Activated CD4-positive, alpha-beta T cell treated with anti-CD3 and anti-CD28 coated beads, Interleukin-2, amount 10 ng/mL, durations not matched to agents 7 days and 5 days (primary cell): ENCODE measurements at regions of chr6 and their contacts with region 1.

Region 1: DNA sequence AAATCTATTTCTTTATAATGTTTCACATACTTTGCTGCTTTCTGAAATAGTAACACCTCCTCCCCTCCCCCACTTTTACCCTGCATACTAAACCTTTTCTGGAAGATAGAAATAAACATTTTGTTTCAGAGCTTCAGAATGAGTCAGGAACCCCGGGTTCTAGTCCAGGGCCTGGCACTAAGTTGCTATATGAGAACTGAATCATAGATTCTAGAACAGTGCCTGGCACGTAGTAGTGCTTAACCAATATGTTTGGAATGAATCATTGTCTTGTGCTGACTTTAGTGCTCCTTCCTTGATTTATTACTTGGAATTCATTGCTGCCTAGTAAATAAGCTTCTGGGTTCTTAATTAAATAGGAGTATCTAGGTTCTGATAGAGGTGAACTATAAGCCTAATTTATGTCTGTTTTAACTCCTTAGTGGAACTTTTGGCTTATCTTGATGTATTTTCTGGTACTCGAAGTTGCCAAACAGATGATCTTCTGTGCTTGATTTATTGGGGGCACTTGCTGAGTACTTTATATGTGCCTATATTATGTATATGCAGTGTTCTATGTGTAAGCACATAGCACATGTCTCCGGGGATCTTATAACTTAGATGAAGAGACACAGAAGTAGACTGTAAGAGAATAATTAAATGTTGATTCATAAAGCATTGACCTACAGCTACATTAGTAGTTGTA is 18.6 kb downstream of the TAB2 start:
- DNase-seq: peak; percentile 20
- H3K4me3 Mint-ChIP-seq: peak overlapping the region; percentile 1
- H3K27ac Mint-ChIP-seq: peak overlapping the region; percentile 72
- H3K4me1 Mint-ChIP-seq: peaks cover 82% of the 10 kb centered on the region
- H3K27me3 Mint-ChIP-seq: no peaks in the 10 kb centered on the region

Region 2: GRCh38 chr6:149324428-149324827 is 11.6 kb before region 1 on chr6:
- CTCF ChIA-PET with region 1: interaction called, 30 read pairs
- POLR2A ChIA-PET with region 1: no interaction called
- DNase-seq: no peak
- H3K4me3 Mint-ChIP-seq: peak overlapping the region; percentile 40
- H3K27ac Mint-ChIP-seq: peak overlapping the region; percentile 68
- H3K4me1 Mint-ChIP-seq: peaks cover 78% of the 10 kb centered on the region
- H3K27me3 Mint-ChIP-seq: no peaks in the 10 kb centered on the region

Region 3: GRCh38 chr6:149484733-149485700 is 149.0 kb after region 1 on chr6 and contains the start of gene ZC3H12D:
- CTCF ChIA-PET with region 1: no interaction called
- POLR2A ChIA-PET with region 1: no interaction called
- DNase-seq: peak; percentile 85
- H3K4me3 Mint-ChIP-seq: peak within 1 kb of the TSS; percentile 78
- H3K27ac Mint-ChIP-seq: peak within 1 kb of the TSS; percentile 99
- H3K4me1 Mint-ChIP-seq: peaks cover 59% of the 10 kb centered on the region
- H3K27me3 Mint-ChIP-seq: no peaks in the 10 kb centered on the region
- total RNA-seq, gene ZC3H12D: 10.7 to 16.5 TPM